ENCODE measurements at regions of chr11 and their contacts with region 1.

Region 1: GRCh38 chr11:88337181-88337986 is at the start of gene CTSC:
- DNase-seq: peak; percentile 62 to 96
- H3K4me3 ChIP-seq: peak within 1 kb of the TSS; percentile 74 to 95
- H3K27ac ChIP-seq: peak within 1 kb of the TSS; percentile 70 to 82
- H3K4me1 ChIP-seq: no peaks in the 10 kb centered on the region
- H3K27me3 ChIP-seq: no peaks in the 10 kb centered on the region
- CTCF ChIP-seq: no peak
- total RNA-seq, gene CTSC: 164 TPM

Region 2: DNA sequence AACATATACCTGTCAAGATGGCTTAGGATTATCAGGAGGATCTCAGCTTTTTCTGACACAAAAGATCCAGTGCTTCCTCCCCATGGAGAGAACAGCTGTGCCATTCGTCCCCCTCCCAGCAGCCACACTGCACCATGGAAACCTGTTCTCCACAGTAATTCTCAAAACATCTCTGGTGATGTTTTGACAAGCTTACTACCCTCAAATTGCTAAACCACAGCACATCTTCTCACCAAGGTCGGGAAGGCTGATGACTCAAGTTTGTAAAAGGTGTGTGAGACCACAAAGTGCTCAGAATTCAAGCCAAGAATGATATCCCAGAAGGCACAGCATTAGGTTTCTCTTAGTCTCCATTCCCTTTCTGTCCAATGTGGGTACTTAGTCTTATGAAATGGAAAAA is 158.2 kb before region 1 on chr11:
- intact Hi-C with region 1: no loop called
- DNase-seq: no peak
- H3K4me3 ChIP-seq: no peak overlapping the region
- H3K27ac ChIP-seq: no peak overlapping the region
- H3K4me1 ChIP-seq: peaks cover 0 to 2% of the 10 kb centered on the region in 2 donors
- H3K27me3 ChIP-seq: no peaks in the 10 kb centered on the region
- CTCF ChIP-seq: no peak

Region 3: DNA sequence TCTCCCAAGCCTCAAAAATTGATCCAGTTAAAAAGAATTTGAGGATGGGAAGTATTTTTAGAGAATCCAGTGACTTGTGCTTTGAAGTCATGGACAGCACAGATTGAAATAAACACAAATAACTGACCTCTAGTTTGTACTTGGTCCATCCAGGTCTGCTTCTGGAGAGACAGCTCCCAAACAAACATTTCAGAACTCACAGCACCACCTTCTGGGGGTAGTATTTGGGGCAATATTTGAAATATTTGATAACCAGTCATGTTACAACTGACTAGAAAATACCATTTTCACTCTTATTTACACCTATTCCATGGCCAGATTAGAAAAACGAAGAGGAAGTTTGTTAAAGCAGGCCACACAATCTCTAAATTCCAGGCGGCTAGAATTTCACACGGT is 56.1 kb before region 1 on chr11:
- intact Hi-C with region 1: loop called (anchors 5 kb)
- DNase-seq: no peak
- H3K4me3 ChIP-seq: no peak overlapping the region
- H3K27ac ChIP-seq: peak overlapping the region in 1 of 2 donors; percentile 34
- H3K4me1 ChIP-seq: peaks cover 4 to 30% of the 10 kb centered on the region in 2 donors
- H3K27me3 ChIP-seq: no peaks in the 10 kb centered on the region
- CTCF ChIP-seq: no peak

Region 4: DNA sequence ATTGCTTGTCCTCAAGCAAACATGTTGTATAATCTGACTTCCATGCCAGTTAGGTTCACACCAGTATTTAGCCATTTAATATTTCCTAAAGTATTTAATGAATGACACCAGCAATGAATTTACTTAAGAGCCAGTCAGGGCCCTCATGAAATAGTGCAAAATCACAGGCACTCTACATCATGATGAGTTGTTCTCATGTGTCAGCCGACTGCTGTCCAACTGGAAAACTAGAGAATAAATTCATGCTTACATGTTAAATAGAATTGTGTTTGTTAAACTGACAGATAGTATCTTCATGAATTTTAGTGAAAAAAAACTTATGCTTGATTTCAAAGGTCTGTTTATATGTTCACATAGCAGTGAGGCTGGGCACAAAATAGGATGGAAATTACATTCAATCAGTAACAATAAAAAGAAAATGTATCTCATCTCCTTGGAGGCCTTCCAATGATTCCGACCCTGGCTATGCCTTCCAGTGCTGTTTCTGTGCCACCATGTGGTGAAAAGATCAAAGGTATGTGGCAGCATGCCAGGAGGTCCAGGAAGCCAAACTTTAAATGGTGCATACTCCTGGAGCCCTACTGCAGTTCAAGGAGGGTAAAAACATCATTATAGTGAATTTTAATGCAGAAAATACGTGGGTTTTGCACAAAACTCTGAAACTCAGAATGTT is 45.1 kb before region 1 on chr11:
- intact Hi-C with region 1: no loop called
- DNase-seq: no peak
- H3K4me3 ChIP-seq: no peak overlapping the region
- H3K27ac ChIP-seq: no peak overlapping the region
- H3K4me1 ChIP-seq: peaks cover 0 to 5% of the 10 kb centered on the region in 2 donors
- H3K27me3 ChIP-seq: no peaks in the 10 kb centered on the region
- CTCF ChIP-seq: no peak

Region 5: DNA sequence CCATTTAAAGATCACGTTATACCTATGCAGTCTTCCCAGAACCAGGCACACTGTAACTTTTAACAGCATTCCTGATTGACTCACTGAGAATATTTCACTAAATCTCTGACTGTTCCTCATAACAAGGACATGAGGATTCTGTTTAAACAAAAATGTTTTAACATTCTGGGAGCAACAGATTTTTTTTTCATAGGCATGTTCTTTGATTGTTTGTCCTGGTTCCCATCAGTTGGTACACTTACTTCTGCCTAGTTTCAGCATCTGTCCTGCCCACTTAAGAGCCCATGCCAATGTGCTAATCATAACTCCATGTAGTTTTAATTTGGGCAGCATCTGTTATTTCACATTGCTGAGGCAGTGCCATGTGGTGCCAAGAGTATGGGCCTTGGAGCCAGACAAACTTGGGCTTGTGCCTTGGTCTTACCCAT is 138.6 kb after region 1 on chr11:
- intact Hi-C with region 1: loop called (anchors 5 kb)
- DNase-seq: no peak
- H3K4me3 ChIP-seq: no peak overlapping the region
- H3K27ac ChIP-seq: no peak overlapping the region
- H3K4me1 ChIP-seq: peaks cover 0 to 4% of the 10 kb centered on the region in 2 donors
- H3K27me3 ChIP-seq: no peaks in the 10 kb centered on the region
- CTCF ChIP-seq: no peak

Region 6: GRCh38 chr11:89182773-89183518 is 845.6 kb after region 1 on chr11:
- intact Hi-C with region 1: loop called (anchors 10 kb)
- DNase-seq: no peak
- H3K4me3 ChIP-seq: no peak overlapping the region
- H3K27ac ChIP-seq: peak overlapping the region; percentile 41 to 62
- H3K4me1 ChIP-seq: peaks cover 0 to 5% of the 10 kb centered on the region in 2 donors
- H3K27me3 ChIP-seq: no peaks in the 10 kb centered on the region
- CTCF ChIP-seq: no peak

Measured in ascending aorta (tissue), 2 donors.